ENCODE measurements at regions of chr7 and their contacts with region 1.

Region 1: GRCh38 chr7:127347567-127348246 is 44.8 kb downstream of the ZNF800 start:
- DNase-seq: peak; percentile 71
- ATAC-seq: peak; percentile 99
- H3K4me3 Mint-ChIP-seq: peak overlapping the region; percentile 51
- H3K27ac Mint-ChIP-seq: no peak overlapping the region
- H3K4me1 Mint-ChIP-seq: peaks cover 8% of the 10 kb centered on the region
- H3K27me3 Mint-ChIP-seq: peaks cover 15% of the 10 kb centered on the region

Region 2: GRCh38 chr7:127330070-127330469 is 17.6 kb before region 1 on chr7:
- CTCF ChIA-PET with region 1: no interaction called
- POLR2A ChIA-PET with region 1: no interaction called
- DNase-seq: no peak
- ATAC-seq: no peak
- H3K4me3 Mint-ChIP-seq: no peak overlapping the region
- H3K27ac Mint-ChIP-seq: no peak overlapping the region
- H3K4me1 Mint-ChIP-seq: no peaks in the 10 kb centered on the region
- H3K27me3 Mint-ChIP-seq: peaks cover 35% of the 10 kb centered on the region

Region 3: DNA sequence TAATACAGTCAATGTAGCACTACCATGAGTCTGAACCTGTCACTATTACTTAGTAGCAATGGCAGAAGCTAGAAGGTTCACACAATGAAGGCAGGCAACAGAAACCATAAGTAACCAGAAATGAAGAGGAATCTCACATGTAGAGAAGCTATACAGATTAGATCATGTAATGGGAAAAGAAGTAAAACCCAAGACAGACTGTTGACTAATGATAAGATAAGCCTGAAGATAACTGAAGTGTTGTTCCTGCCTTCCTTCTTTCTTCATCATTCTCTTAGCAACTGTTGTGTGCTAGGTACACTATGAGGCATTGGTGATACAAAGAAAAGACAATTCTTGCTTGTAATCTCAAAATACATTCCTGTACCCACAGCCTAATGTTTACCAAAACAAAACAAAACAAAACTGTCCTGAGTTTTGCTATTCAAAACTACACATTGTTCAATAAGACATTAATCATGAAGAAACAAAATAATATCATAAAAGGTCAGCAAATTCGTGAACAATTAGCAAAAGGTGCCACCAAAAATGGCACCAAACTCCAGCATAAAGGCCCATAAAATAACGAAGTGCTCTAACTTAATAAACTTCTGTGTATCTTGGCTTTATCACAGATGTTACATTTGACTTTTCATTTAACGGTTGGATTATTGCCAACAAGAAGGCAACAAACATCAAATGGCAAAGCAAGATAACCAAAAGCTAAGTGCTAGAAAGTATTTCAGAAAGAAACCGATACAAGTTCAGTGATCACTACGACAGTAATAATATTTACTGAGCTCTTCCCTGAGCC is 17.7 kb after region 1 on chr7:
- CTCF ChIA-PET with region 1: interaction called, 12 read pairs
- POLR2A ChIA-PET with region 1: interaction called, 3 read pairs
- DNase-seq: no peak
- ATAC-seq: no peak
- H3K4me3 Mint-ChIP-seq: no peak overlapping the region
- H3K27ac Mint-ChIP-seq: no peak overlapping the region
- H3K4me1 Mint-ChIP-seq: peaks cover 8% of the 10 kb centered on the region
- H3K27me3 Mint-ChIP-seq: no peaks in the 10 kb centered on the region

Region 4: DNA sequence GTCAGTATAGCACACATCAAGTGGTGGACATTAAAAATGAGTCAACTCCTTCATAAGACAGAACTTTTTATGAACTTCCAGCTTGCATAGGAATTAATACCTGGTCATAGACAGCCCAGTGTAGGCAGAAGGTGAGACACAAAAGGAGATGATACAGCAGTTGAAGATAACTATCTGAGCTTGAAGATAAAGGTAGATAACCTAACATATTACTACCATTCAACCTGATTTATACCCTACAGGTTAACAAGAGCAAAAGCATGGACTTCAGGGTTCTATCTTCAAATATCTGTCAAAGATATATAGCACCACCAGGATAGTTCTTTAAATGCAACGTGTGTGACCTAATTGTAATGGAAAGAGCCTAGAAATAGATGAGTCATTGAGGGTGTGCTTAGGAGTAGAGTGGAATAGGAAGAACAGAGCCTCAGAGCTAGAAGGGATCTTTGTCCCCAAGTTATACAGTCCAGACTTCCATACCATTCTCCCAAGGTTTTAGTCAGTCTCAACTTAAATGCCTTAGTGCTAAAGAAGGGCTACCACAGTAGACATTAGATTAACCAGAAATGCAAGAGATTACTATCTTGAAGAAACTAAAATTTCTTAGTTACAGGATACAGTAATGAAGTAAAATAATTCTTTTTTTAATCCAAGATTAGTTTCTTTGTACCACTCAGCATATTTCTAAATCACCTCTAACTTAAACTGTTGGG is 35.6 kb after region 1 on chr7:
- CTCF ChIA-PET with region 1: interaction called, 10 read pairs
- POLR2A ChIA-PET with region 1: no interaction called
- DNase-seq: no peak
- ATAC-seq: peak; percentile 36
- H3K4me3 Mint-ChIP-seq: no peak overlapping the region
- H3K27ac Mint-ChIP-seq: no peak overlapping the region
- H3K4me1 Mint-ChIP-seq: peaks cover 56% of the 10 kb centered on the region
- H3K27me3 Mint-ChIP-seq: no peaks in the 10 kb centered on the region

Region 5: DNA sequence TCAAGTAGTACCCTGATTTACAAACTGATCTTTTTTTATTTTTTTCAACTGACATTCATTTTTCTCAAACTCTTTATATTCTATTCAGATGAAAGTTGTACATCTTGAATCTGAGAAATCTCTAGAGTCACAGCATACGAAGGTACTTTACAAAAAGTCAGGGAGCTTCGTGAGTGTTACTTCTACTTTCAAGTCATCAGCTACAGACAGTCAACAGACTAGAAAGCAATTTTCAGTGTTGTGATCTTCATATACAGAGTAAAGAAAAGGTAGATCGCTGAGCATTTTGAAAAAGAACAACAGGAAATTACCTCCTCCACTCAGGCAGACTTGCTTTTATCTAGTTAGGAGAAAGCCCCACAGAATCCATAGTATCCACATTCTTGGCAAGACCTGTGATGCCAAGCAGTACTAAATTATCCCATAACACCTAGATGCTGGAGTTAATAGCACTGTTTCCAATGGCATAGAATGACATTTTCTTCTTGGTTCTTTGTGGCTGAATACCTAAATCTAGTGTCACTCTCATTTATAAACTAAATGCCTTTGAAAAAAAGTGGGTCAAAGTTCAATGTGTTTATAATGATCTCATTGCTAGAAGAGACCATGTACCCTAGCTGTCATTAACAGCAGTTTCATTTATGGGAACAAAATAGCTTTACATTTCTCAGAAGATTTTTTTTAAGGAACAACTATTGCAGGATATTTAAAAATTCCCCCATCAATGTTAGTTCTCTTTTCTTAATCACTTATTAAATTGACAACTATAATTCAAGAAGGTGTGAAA is 56.8 kb after region 1 on chr7:
- CTCF ChIA-PET with region 1: interaction called, 26 read pairs
- POLR2A ChIA-PET with region 1: no interaction called
- DNase-seq: no peak
- ATAC-seq: no peak
- H3K4me3 Mint-ChIP-seq: no peak overlapping the region
- H3K27ac Mint-ChIP-seq: no peak overlapping the region
- H3K4me1 Mint-ChIP-seq: peaks cover 12% of the 10 kb centered on the region
- H3K27me3 Mint-ChIP-seq: peaks cover 6% of the 10 kb centered on the region

Region 6: GRCh38 chr7:127447326-127447945 is 99.7 kb after region 1 on chr7:
- CTCF ChIA-PET with region 1: interaction called, 51 read pairs
- POLR2A ChIA-PET with region 1: interaction called, 5 read pairs
- DNase-seq: peak; percentile 76
- ATAC-seq: peak; percentile 99
- H3K4me3 Mint-ChIP-seq: no peak overlapping the region
- H3K27ac Mint-ChIP-seq: peak overlapping the region; percentile 33
- H3K4me1 Mint-ChIP-seq: peaks cover 13% of the 10 kb centered on the region
- H3K27me3 Mint-ChIP-seq: peaks cover 26% of the 10 kb centered on the region

Region 7: DNA sequence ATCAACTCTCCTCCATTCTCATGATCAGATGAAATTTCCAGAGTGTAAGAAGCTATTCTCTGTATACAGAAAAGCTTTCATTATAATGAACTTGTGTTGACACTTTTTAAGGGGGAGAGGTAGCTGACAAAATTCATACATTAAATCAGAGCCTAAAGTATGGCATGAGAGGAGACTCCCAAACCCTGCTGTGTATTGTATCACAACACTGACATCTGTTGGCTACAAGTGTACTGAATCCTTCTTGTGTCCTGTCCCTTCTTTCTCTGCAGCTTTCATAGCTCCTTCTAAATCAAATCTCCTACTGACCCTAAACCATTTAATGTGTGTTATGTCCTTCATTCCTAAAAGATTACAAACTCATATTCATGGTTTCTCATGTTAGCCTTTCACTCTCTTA is 166.8 kb after region 1 on chr7:
- CTCF ChIA-PET with region 1: interaction called, 12 read pairs
- POLR2A ChIA-PET with region 1: no interaction called
- DNase-seq: no peak
- ATAC-seq: peak; percentile 53
- H3K4me3 Mint-ChIP-seq: no peak overlapping the region
- H3K27ac Mint-ChIP-seq: no peak overlapping the region
- H3K4me1 Mint-ChIP-seq: no peaks in the 10 kb centered on the region
- H3K27me3 Mint-ChIP-seq: peaks cover 19% of the 10 kb centered on the region

Region 8: DNA sequence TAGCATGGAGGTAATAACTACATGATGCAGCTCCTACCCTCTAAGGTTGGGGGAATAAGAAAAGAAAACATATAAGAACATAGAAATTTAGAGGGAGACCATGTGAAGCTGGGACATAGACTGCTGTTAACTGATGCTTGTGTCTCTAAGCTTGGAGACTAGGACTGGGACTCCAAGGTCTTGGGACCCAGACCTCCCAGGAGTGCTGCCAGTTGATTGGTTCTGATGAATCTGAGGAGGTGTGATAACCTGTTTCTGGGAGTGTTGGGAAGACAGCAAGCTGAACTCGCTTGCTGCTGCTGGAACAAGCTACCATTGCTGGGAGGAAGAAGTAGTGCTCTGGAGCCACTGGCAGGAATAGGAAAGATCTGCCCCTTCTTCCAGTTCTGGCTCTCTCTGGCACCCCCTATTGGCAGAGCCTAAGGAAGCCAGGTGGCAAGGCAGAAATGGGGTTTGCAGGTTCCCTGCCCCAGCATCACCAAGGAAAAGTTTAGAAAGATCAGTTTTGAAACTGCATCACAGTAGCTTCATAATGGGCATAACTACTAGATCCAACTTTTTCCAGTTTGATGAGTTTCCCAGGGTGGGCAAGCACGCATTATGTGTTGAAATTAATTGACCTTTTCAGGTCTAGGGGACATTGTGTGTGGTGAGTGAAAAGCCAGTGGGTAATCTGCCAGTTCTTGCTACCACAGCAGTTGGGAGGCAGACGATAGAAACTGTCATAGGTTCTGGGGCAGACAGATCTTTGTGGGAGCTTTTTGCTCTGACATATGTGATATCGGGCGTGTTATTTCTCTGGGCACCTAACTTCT is 445.0 kb after region 1 on chr7:
- CTCF ChIA-PET with region 1: no interaction called
- POLR2A ChIA-PET with region 1: no interaction called
- DNase-seq: peak; percentile 58
- ATAC-seq: peak; percentile 65
- H3K4me3 Mint-ChIP-seq: no peak overlapping the region
- H3K27ac Mint-ChIP-seq: no peak overlapping the region
- H3K4me1 Mint-ChIP-seq: peaks cover 5% of the 10 kb centered on the region
- H3K27me3 Mint-ChIP-seq: no peaks in the 10 kb centered on the region

Measured in activated CD8-positive, alpha-beta T cell treated with anti-CD3 and anti-CD28 coated beads, Interleukin-2, amount 10 ng/mL, durations not matched to agents 7 days and 5 days (primary cell).